ENCODE measurements at regions of chr5 and their contacts with region 1.

Region 1: GRCh38 chr5:175796536-175797499 is 74.6 kb upstream of the CPLX2 start:
- DNase-seq: peak; percentile 80
- H3K4me3 ChIP-seq: peak overlapping the region; percentile 47 to 57
- H3K27ac ChIP-seq: peak overlapping the region in 1 of 2 experiments; percentile 92; a peak in 2 of 4 replicates
- H3K4me1 ChIP-seq: peaks cover 0 to 27% of the 10 kb centered on the region in 2 experiments; a peak in 2 of 4 replicates
- H3K27me3 ChIP-seq: peaks cover 6% of the 10 kb centered on the region; the same call in 1 of the 2 replicates
- CTCF ChIP-seq: no peak
- EP300 ChIP-seq: no peak
- RAD21 ChIP-seq: no peak

Region 2: DNA sequence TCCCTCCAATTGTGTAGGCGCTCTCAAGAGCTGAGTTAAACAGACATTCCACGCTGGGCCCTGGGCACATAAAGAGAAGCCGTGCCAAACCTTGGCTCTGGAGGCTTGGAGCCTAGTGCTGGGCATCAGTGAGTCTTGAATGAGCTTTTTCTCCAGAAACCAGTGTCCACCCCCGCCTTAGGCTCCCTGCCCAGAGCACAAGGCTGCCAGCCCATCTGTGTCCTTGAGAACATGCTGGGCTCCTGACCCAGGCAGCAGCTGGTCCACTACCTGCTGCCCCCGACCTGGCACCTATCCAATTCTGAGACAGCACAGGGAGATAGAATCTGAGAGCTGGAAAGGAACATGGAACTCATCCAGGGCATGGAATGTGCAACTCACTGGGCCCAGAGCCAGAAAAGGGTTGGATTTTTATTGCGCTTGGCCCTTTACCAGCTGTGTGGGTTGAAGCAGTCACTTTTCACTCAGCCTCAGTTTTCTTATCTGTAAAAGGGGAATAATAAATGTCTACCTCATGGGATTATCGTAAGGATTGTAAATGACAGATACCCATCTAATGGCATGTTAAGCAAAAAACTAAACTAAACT is 17.8 kb before region 1 on chr5:
- CTCF ChIA-PET with region 1: interaction called, 7 read pairs
- POLR2A ChIA-PET with region 1: interaction called, 21 read pairs
- DNase-seq: peak; percentile 89
- H3K4me3 ChIP-seq: no peak overlapping the region
- H3K27ac ChIP-seq: peak overlapping the region in 1 of 2 experiments; percentile 6; a peak in 1 of 4 replicates
- H3K4me1 ChIP-seq: peaks cover 0 to 4% of the 10 kb centered on the region in 2 experiments; a peak in 2 of 4 replicates
- H3K27me3 ChIP-seq: no peaks in the 10 kb centered on the region
- CTCF ChIP-seq: no peak
- EP300 ChIP-seq: peak; percentile 34 to 88; a peak in 3 of 4 replicates
- RAD21 ChIP-seq: peak; percentile 13; the same call in 1 of the 2 replicates

Region 3: GRCh38 chr5:175814691-175815090 is 17.9 kb after region 1 on chr5:
- CTCF ChIA-PET with region 1: interaction called, 4 read pairs
- POLR2A ChIA-PET with region 1: interaction called, 16 read pairs
- DNase-seq: peak; percentile 67
- H3K4me3 ChIP-seq: no peak overlapping the region
- H3K27ac ChIP-seq: peak overlapping the region in 1 of 2 experiments; percentile 62; a peak in 2 of 4 replicates
- H3K4me1 ChIP-seq: peaks cover 4 to 15% of the 10 kb centered on the region in 2 experiments; a peak in 2 of 4 replicates
- H3K27me3 ChIP-seq: no peaks in the 10 kb centered on the region
- CTCF ChIP-seq: no peak
- EP300 ChIP-seq: peak in 1 of 2 experiments; percentile 17; a peak in 1 of 4 replicates
- RAD21 ChIP-seq: no peak

Region 4: GRCh38 chr5:175861337-175862130 is 64.7 kb after region 1 on chr5:
- CTCF ChIA-PET with region 1: interaction called, 10 read pairs
- POLR2A ChIA-PET with region 1: interaction called, 4 read pairs
- DNase-seq: peak; percentile 55
- H3K4me3 ChIP-seq: no peak overlapping the region
- H3K27ac ChIP-seq: peak overlapping the region in 1 of 2 experiments; percentile 93; a peak in 2 of 4 replicates
- H3K4me1 ChIP-seq: peaks cover 0 to 25% of the 10 kb centered on the region in 2 experiments; a peak in 1 of 4 replicates
- H3K27me3 ChIP-seq: no peaks in the 10 kb centered on the region
- CTCF ChIP-seq: no peak
- EP300 ChIP-seq: peak in 1 of 2 experiments; percentile 81; a peak in 2 of 4 replicates
- RAD21 ChIP-seq: no peak

Region 5: GRCh38 chr5:175867587-175868347 is 70.9 kb after region 1 on chr5:
- CTCF ChIA-PET with region 1: interaction called, 47 read pairs
- POLR2A ChIA-PET with region 1: interaction called, 16 read pairs
- DNase-seq: peak; percentile 85
- H3K4me3 ChIP-seq: no peak overlapping the region
- H3K27ac ChIP-seq: peak overlapping the region in 1 of 2 experiments; percentile 43; a peak in 2 of 4 replicates
- H3K4me1 ChIP-seq: peaks cover 0 to 21% of the 10 kb centered on the region in 2 experiments; a peak in 1 of 4 replicates
- H3K27me3 ChIP-seq: no peaks in the 10 kb centered on the region
- CTCF ChIP-seq: peak; percentile 22
- EP300 ChIP-seq: peak in 1 of 2 experiments; percentile 15; a peak in 1 of 4 replicates
- RAD21 ChIP-seq: peak; percentile 75

Region 6: GRCh38 chr5:175873088-175873454 is 76.3 kb after region 1 on chr5:
- CTCF ChIA-PET with region 1: interaction called, 47 read pairs
- POLR2A ChIA-PET with region 1: interaction called, 16 read pairs
- DNase-seq: peak; percentile 89
- H3K4me3 ChIP-seq: no peak overlapping the region; a peak in 1 of 4 replicates
- H3K27ac ChIP-seq: no peak overlapping the region
- H3K4me1 ChIP-seq: peaks cover 0 to 12% of the 10 kb centered on the region in 2 experiments; a peak in 1 of 4 replicates
- H3K27me3 ChIP-seq: peaks cover 11% of the 10 kb centered on the region; the same call in 1 of the 2 replicates
- CTCF ChIP-seq: peak; percentile 35; the same call in 1 of the 2 replicates
- EP300 ChIP-seq: no peak
- RAD21 ChIP-seq: peak; percentile 58

Measured in SK-N-SH (cell line).